ENCODE measurements at regions of chr11 and their contacts with region 1.

Region 1: GRCh38 chr11:76919887-76920746 is 59.4 kb downstream of the ACER3 start:
- DNase-seq: peak; percentile 75
- ATAC-seq: peak; percentile 82
- H3K4me3 Mint-ChIP-seq: peak overlapping the region; percentile 6
- H3K27ac Mint-ChIP-seq: no peak overlapping the region
- H3K4me1 Mint-ChIP-seq: peaks cover 13% of the 10 kb centered on the region
- H3K27me3 Mint-ChIP-seq: no peaks in the 10 kb centered on the region

Region 2: GRCh38 chr11:76491656-76492055 is 428.5 kb before region 1 on chr11:
- CTCF ChIA-PET with region 1: no interaction called
- DNase-seq: no peak
- ATAC-seq: no peak
- H3K4me3 Mint-ChIP-seq: no peak overlapping the region
- H3K27ac Mint-ChIP-seq: no peak overlapping the region
- H3K4me1 Mint-ChIP-seq: peaks cover 10% of the 10 kb centered on the region
- H3K27me3 Mint-ChIP-seq: no peaks in the 10 kb centered on the region

Region 3: GRCh38 chr11:76721755-76722677 is 198.1 kb before region 1 on chr11:
- CTCF ChIA-PET with region 1: interaction called, 12 read pairs
- DNase-seq: peak; percentile 81
- ATAC-seq: peak; percentile 98
- H3K4me3 Mint-ChIP-seq: no peak overlapping the region
- H3K27ac Mint-ChIP-seq: no peak overlapping the region
- H3K4me1 Mint-ChIP-seq: peaks cover 7% of the 10 kb centered on the region
- H3K27me3 Mint-ChIP-seq: peaks cover 40% of the 10 kb centered on the region

Region 4: DNA sequence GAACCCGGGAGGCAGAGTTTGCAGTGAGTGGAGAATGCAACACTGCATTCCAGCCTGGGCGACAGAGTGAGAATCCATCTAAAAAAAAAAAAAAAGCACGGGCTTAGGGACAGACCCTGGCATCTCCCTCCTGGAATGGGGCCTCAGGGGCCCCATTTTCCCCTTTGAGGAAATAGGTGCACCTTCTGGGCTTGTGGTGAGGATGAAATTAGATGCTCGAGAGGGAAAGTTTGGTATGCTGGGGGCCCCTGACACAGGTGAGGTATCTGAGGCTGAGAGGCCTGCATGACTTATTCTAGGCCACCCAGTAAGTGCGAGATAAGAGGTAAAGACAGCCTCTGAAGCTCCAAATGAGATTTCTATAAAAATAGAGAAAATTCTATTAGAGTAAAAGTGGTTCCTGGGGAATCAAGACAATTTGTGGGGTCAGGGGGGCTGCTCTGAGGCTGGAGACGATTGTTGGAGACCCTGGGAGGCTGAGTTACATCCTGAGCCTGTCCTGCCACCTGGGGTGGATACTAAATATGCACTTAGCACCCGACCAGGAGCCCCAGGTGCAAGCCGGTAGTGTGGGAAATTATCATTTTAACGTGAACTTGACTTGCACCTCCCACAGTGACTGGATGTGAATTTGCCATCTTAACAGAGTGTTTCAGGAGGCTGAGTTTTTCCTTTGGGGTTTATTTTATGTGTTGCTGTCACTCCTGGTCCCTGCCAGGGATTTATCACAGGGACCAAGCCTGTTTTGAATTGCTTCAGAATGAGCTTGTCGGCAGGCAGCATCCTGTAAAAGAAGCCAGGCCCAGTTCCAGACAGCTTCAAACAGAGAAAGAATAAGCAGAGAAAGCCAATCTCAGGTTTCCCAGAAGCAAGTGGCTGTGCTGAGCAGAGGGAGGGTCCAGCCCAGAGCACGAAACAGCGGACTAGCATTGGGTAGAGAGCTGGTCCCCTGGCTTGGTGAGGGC is 185.4 kb before region 1 on chr11:
- CTCF ChIA-PET with region 1: interaction called, 20 read pairs
- DNase-seq: no peak
- ATAC-seq: no peak
- H3K4me3 Mint-ChIP-seq: no peak overlapping the region
- H3K27ac Mint-ChIP-seq: no peak overlapping the region
- H3K4me1 Mint-ChIP-seq: peaks cover 7% of the 10 kb centered on the region
- H3K27me3 Mint-ChIP-seq: peaks cover 6% of the 10 kb centered on the region

Region 5: GRCh38 chr11:76799066-76799804 is 120.9 kb before region 1 on chr11:
- CTCF ChIA-PET with region 1: interaction called, 58 read pairs
- DNase-seq: peak; percentile 82
- ATAC-seq: peak; percentile 95
- H3K4me3 Mint-ChIP-seq: no peak overlapping the region
- H3K27ac Mint-ChIP-seq: no peak overlapping the region
- H3K4me1 Mint-ChIP-seq: peaks cover 18% of the 10 kb centered on the region
- H3K27me3 Mint-ChIP-seq: peaks cover 12% of the 10 kb centered on the region

Region 6: DNA sequence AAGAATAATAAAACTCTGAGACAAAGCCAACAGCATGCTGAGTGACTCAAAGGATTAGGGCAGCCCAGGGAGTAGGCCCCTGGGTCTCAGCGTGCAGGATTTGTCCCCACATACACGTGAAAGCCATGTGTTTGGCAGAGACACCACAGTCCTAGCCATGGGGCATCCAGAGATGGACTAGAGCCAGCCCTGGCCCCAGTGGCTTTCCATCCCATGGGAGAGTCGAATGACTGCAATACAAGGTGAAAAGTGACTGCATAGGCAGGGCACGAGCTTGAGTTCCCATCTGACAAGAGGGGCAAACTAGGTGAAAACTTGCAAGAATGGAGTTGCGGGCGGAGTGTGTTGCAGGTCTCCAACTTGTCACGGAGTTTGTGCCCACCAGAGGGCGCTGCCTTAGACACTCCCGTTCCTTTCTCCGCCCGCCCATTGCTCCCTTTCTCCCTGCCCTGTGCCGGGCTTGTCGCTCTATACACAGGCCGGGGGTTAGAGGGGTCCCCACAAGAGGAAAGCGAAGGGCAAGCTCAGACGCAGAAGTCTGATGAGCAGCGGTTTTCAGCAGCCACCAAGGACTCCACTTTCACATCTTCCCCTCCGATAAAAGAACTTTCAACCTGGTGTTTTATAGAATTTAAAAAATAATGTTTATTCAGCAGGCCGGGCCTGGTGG is 112.8 kb before region 1 on chr11:
- CTCF ChIA-PET with region 1: interaction called, 94 read pairs
- DNase-seq: peak; percentile 76
- ATAC-seq: peak; percentile 54
- H3K4me3 Mint-ChIP-seq: no peak overlapping the region
- H3K27ac Mint-ChIP-seq: no peak overlapping the region
- H3K4me1 Mint-ChIP-seq: peaks cover 37% of the 10 kb centered on the region
- H3K27me3 Mint-ChIP-seq: peaks cover 3% of the 10 kb centered on the region

Region 7: DNA sequence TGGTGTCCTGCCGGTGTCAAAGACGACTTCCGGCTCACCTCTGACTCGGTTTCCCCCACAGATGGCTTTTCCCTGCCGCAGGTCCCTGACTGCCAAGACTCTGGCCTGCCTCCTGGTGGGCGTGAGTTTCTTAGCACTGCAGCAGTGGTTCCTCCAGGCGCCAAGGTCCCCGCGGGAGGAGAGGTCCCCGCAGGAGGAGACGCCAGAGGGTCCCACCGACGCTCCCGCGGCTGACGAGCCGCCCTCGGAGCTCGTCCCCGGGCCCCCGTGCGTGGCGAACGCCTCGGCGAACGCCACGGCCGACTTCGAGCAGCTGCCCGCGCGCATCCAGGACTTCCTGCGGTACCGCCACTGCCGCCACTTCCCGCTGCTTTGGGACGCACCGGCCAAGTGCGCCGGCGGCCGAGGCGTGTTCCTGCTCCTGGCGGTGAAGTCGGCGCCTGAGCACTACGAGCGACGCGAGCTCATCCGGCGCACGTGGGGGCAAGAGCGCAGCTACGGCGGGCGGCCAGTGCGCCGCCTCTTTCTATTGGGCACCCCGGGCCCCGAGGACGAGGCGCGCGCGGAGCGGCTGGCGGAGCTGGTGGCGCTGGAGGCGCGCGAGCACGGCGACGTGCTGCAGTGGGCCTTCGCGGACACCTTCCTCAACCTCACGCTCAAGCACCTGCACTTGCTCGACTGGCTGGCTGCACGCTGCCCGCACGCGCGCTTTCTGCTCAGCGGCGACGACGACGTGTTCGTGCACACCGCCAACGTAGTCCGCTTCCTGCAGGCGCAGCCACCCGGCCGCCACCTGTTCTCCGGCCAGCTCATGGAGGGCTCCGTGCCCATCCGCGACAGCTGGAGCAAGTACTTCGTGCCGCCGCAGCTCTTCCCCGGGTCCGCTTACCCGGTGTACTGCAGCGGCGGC is 119.6 kb after region 1 on chr11:
- CTCF ChIA-PET with region 1: interaction called, 22 read pairs
- DNase-seq: peak; percentile 45
- ATAC-seq: peak; percentile 60
- H3K4me3 Mint-ChIP-seq: no peak overlapping the region
- H3K27ac Mint-ChIP-seq: no peak overlapping the region
- H3K4me1 Mint-ChIP-seq: peaks cover 4% of the 10 kb centered on the region
- H3K27me3 Mint-ChIP-seq: peaks cover 59% of the 10 kb centered on the region